ENCODE measurements at regions of chr11 and their contacts with region 1.

Region 1: DNA sequence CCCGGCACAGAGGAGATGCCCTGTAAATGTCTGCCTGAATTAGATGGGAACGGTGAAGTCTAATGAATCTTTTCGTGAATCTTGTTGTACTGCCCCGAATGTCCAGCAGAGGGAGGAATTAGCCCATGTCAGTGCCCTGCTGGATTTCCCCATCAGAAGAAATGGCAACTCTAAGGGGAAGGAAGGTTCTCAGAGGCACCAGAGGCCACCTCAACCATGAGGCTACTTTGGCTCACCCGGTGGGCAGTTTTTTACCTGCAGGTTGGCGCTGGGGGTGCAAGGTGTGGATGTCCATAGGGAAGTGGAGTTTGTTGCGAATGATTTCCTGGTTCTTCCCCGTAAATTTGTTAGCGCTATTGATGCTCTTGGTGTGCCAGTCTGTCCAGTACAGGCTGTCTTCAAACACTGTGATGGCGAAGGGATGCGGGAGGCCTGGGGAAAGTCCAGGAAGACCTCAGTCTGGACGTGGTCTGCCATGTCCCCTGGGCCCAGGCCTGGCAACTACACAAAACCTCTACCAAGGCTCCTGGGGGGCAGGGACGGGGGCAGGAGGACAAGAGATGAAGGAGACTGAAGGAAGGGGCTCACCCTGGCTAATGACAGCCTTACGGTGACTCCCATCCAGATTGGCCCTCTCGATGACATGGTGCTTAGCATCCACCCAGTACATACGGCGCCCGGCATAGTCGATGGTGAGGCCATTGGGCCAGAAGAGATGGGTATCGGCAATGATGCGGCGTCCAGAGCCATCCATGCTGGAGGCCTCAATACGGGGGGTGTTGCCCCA is 28.5 kb downstream of the LRP4 start:
- DNase-seq: peak; percentile 81 to 89
- H3K4me3 ChIP-seq: no peak overlapping the region
- H3K27ac ChIP-seq: no peak overlapping the region
- H3K4me1 ChIP-seq: peaks cover 0 to 3% (median 1%) of the 10 kb centered on the region in 4 donors
- H3K27me3 ChIP-seq: no peaks in the 10 kb centered on the region
- CTCF ChIP-seq: peak in 5 of 7 experiments; percentile 79 to 95 (median 88)
- EP300 ChIP-seq: no peak
- POLR2A ChIP-seq: no peak

Region 2: DNA sequence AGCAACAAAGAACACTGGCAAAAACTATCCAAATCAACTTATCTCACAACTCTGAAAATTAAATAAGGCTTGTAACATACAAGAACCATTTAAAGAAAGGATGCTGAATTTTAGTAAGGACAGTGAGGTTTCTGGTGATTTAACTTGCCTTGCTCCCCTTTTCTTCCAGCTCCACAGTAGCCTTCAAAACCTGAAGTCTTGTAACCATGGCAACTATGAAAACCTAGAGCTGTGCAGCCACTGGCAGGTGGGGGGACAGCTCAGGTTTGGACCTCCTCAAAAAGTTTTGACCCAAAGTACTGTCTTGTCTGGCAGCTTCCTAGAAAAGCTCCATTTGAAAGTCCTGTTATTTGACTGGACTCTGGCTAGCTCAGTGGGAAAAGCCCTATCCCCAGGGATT is 103.8 kb before region 1 on chr11:
- intact Hi-C with region 1: no loop called
- DNase-seq: no peak
- H3K4me3 ChIP-seq: no peak overlapping the region
- H3K27ac ChIP-seq: no peak overlapping the region
- H3K4me1 ChIP-seq: no peaks in the 10 kb centered on the region
- H3K27me3 ChIP-seq: no peaks in the 10 kb centered on the region
- CTCF ChIP-seq: no peak
- EP300 ChIP-seq: no peak
- POLR2A ChIP-seq: no peak

Region 3: GRCh38 chr11:46808799-46809431 is 81.0 kb before region 1 on chr11:
- intact Hi-C with region 1: no loop called
- DNase-seq: peak in 1 of 2 donors; percentile 16
- H3K4me3 ChIP-seq: no peak overlapping the region
- H3K27ac ChIP-seq: no peak overlapping the region
- H3K4me1 ChIP-seq: no peaks in the 10 kb centered on the region
- H3K27me3 ChIP-seq: no peaks in the 10 kb centered on the region
- CTCF ChIP-seq: no peak
- EP300 ChIP-seq: no peak
- POLR2A ChIP-seq: no peak

Region 4: DNA sequence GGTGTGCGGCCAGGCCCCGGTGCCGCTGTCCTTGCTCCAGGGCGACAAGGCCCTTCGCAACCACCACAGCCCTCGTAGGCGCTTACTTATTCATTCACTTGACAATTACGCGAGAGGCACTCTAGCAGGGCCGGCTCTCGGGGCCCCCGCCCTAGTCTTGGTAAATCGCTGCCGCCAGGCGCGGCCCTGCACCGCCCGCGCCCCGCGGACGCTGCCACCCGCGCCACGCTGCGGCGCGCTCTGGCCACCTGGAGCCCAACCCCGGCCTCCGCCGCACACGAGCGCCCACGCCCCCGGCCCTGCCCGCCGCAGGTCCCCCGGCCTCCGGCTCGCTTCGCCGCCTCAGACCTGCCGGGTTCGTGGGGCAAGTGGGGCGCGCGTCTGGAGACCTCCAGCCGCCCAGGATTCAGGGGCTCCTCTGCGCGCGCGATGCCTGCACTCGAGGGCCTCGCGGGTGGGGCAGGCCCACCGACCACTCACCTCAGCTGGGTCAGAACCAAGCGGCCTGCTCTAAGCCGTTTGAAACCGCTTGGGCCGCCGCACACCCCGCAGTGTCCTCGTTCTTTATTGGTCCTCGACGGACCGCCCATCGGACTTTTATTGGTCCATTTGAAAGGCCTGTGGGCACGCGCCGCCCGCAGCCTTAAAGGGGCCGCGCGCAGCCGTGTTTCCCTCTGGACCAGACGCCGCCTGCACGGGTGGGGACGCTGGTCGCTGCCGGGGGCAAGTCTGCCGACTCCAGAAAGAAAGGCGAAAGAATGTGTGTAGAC is 44.0 kb before region 1 on chr11 and contains the start of gene CKAP5:
- intact Hi-C with region 1: no loop called
- DNase-seq: peak; percentile 92 to 97
- H3K4me3 ChIP-seq: peak within 1 kb of the TSS; percentile 82 to 90 (median 86)
- H3K27ac ChIP-seq: peak within 1 kb of the TSS; percentile 81 to 93 (median 85)
- H3K4me1 ChIP-seq: peaks cover 12 to 43% (median 26%) of the 10 kb centered on the region in 4 donors
- H3K27me3 ChIP-seq: no peaks in the 10 kb centered on the region
- CTCF ChIP-seq: no peak
- EP300 ChIP-seq: no peak
- POLR2A ChIP-seq: peak in 1 of 4 donors; percentile 31
- total RNA-seq, gene CKAP5: 35.4 to 327 (median 58.9) TPM

Region 5: GRCh38 chr11:47154616-47155570 is 265.0 kb after region 1 on chr11:
- intact Hi-C with region 1: loop called (anchors 2 kb)
- DNase-seq: no peak
- H3K4me3 ChIP-seq: no peak overlapping the region
- H3K27ac ChIP-seq: peak overlapping the region in 2 of 5 donors; percentile 24 to 30
- H3K4me1 ChIP-seq: peaks cover 10 to 34% (median 19%) of the 10 kb centered on the region in 4 donors
- H3K27me3 ChIP-seq: no peaks in the 10 kb centered on the region
- CTCF ChIP-seq: no peak
- EP300 ChIP-seq: no peak
- POLR2A ChIP-seq: no peak

Measured in stomach (tissue), 19 donors.